Colonic mucosa (tissue), 4 donors: ENCODE measurements at regions of chr10 and their contacts with region 1.

Region 1: DNA sequence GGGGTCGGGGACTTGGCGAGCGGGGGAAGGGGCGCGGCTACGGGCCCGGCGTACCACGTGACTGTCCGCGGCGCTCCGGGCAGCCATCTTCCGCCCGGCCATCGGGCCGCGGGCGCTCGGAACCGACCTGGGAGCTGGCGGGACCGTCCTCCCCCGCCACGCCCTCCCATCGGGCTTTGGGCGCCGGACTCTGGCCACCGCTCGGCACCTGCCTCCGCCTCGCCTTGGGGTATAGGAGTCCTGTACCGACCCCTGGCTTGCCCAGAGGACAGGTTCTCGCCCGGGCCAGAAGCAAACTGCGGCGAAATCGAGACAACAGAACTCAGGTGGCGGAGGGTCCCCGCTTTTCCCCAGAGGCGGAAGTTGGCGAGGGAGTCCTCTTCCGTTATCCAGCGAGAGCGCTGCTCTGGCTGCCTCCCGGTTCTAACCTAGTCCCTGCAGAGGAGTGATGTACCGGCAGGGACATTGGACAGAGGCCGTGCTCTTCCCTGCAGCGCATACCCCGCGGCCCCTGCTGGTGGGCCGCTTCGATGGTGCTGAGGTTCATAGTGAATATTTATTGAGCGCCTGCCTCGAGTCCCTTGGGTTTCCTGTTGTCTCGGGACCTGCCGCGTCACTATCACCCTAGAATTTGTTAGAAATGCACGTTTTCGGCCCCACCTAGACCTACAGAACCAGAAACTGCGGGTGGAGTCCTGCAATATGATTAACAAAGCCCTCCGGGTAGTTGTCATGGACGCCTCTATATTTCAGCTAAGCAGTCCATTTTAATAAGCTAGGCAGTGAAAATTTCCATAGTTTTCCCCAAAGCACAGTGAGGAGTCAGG is 1.3 kb upstream of the SGMS1 start:
- DNase-seq: peak; percentile 85
- H3K4me3 ChIP-seq: peak overlapping the region; percentile 89
- H3K27ac ChIP-seq: peak overlapping the region; percentile 100
- H3K4me1 ChIP-seq: peaks cover 6% of the 10 kb centered on the region
- H3K27me3 ChIP-seq: no peaks in the 10 kb centered on the region
- CTCF ChIP-seq: peak; percentile 35

Region 2: DNA sequence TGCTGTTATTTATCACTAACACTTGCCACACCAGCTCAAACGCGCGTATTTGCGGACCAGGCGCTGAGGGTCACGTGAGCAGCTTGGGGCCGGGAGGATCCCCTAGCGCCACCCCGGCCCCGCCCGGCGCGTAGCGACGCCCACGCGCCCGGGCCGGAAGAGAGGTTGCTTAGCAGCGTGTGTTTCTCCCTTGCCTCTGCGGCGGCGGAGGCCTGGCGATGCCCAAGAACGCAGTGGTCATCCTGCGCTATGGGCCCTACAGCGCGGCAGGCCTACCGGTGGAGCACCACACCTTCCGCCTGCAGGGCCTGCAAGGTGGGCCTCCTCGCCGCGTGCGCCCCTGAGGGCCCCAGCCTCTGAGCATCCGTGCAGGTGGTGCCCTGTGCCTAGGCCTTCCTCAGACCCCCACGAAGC is 945.6 kb before region 1 on chr10 and contains the start of gene C10orf53:
- intact Hi-C with region 1: no loop called
- DNase-seq: peak; percentile 43
- H3K4me3 ChIP-seq: no peak within 1 kb of the TSS
- H3K27ac ChIP-seq: no peak within 1 kb of the TSS
- H3K4me1 ChIP-seq: no peaks in the 10 kb centered on the region
- H3K27me3 ChIP-seq: no peaks in the 10 kb centered on the region
- CTCF ChIP-seq: no peak
- total RNA-seq, gene C10orf53: not detected

Region 3: GRCh38 chr10:50304660-50305059 is 320.4 kb before region 1 on chr10:
- intact Hi-C with region 1: no loop called
- DNase-seq: no peak
- H3K4me3 ChIP-seq: no peak overlapping the region
- H3K27ac ChIP-seq: no peak overlapping the region
- H3K4me1 ChIP-seq: no peaks in the 10 kb centered on the region
- H3K27me3 ChIP-seq: no peaks in the 10 kb centered on the region
- CTCF ChIP-seq: no peak

Region 4: GRCh38 chr10:50417886-50418830 is 206.9 kb before region 1 on chr10:
- intact Hi-C with region 1: loop called (anchors 10 kb)
- DNase-seq: peak; percentile 74
- H3K4me3 ChIP-seq: peak overlapping the region; percentile 61
- H3K27ac ChIP-seq: peak overlapping the region; percentile 64
- H3K4me1 ChIP-seq: no peaks in the 10 kb centered on the region
- H3K27me3 ChIP-seq: no peaks in the 10 kb centered on the region
- CTCF ChIP-seq: no peak

Region 5: GRCh38 chr10:50558371-50558770 is 66.7 kb before region 1 on chr10:
- intact Hi-C with region 1: loop called (anchors 2 kb)
- DNase-seq: no peak
- H3K4me3 ChIP-seq: no peak overlapping the region
- H3K27ac ChIP-seq: no peak overlapping the region
- H3K4me1 ChIP-seq: no peaks in the 10 kb centered on the region
- H3K27me3 ChIP-seq: no peaks in the 10 kb centered on the region
- CTCF ChIP-seq: no peak